Testis (tissue), 5 donors: ENCODE measurements at regions of chr11 and their contacts with region 1.

Region 1: DNA sequence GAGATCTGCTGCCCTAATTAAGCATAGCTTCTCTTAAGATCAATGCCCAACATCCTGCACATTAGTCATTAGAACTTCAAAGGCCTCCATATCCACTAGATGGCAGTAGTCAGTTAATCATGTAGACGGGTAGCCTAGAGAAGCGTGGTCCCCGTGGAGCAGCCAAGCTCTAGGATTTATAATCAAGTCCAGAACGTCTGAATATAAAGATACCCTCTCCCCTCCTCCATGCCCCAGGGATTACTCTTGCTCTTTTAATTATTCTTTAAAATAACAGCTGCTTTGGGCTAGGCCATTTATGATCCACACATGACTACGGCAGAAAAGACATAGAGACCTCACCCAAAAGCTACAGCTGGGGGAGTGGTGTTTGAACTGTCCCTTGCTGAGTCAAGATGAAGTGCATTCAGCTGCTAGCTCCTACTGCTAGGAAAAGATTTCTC is 327.6 kb upstream of the PLET1 start:
- DNase-seq: peak; percentile 84
- H3K4me3 ChIP-seq: no peak overlapping the region
- H3K27ac ChIP-seq: no peak overlapping the region
- H3K4me1 ChIP-seq: no peaks in the 10 kb centered on the region
- H3K27me3 ChIP-seq: no peaks in the 10 kb centered on the region
- CTCF ChIP-seq: peak; percentile 47 to 69 (median 64)
- POLR2A ChIP-seq: no peak

Region 2: GRCh38 chr11:112751329-112751728 is 163.1 kb after region 1 on chr11:
- intact Hi-C with region 1: no loop called
- DNase-seq: no peak
- H3K4me3 ChIP-seq: no peak overlapping the region
- H3K27ac ChIP-seq: no peak overlapping the region
- H3K4me1 ChIP-seq: no peaks in the 10 kb centered on the region
- H3K27me3 ChIP-seq: no peaks in the 10 kb centered on the region
- CTCF ChIP-seq: no peak
- POLR2A ChIP-seq: no peak

Region 3: DNA sequence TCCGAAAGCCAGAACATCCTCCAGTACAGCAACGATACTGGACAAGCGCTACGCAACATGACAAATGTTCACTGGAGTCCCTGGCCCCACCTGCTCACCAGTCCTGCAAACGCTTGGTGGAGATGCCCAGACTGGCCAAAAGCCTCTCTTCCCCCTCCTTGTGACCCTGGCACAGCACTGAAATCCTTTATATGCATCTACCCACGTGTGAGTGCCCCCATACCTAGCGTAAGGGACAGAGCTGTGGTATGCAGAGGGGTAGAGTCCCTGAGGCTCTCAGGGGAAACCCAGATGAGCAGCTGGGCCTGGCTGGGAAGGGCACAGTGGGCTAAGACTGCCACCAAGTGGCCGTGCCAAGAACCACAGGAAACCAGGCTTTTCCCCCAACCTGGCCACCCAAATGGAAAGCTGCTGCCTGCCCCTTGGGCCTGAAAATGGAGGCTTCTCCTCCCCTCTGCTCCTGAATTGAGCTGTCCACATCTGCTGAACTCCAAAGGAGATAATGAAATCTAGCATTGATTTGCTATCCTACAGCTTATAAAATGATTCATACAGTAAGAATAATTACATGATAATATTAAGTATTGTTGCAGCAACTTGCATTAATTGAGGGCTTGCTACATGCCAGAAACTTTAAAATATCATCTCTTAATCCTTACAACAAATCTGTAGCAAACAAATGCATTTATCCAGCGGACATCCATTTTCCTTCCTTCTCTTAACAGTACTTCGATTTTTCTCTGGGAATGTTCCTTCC is 701.3 kb after region 1 on chr11:
- intact Hi-C with region 1: loop called (anchors 10 kb)
- DNase-seq: peak; percentile 68
- H3K4me3 ChIP-seq: no peak overlapping the region
- H3K27ac ChIP-seq: no peak overlapping the region
- H3K4me1 ChIP-seq: no peaks in the 10 kb centered on the region
- H3K27me3 ChIP-seq: no peaks in the 10 kb centered on the region
- CTCF ChIP-seq: peak; percentile 52 to 72 (median 71)
- POLR2A ChIP-seq: no peak